ENCODE measurements at regions of chrX and their contacts with region 1.

Region 1: GRCh38 chrX:19372170-19372546 is 28.4 kb downstream of the PDHA1 start:
- DNase-seq: peak in 4 of 5 donors; percentile 41 to 66 (median 50)
- ATAC-seq: peak; percentile 19 to 81 (median 72)
- H3K4me3 ChIP-seq: peak overlapping the region in 11 of 12 donors; percentile 8 to 58 (median 44)
- H3K27ac ChIP-seq: no peak overlapping the region
- H3K4me1 ChIP-seq: peaks cover 0 to 2% (median 0%) of the 10 kb centered on the region in 12 donors
- H3K27me3 ChIP-seq: no peaks in the 10 kb centered on the region
- CTCF ChIP-seq: peak; percentile 47 to 76 (median 61)
- POLR2A ChIP-seq: no peak

Region 2: GRCh38 chrX:18973527-18974192 is 398.5 kb before region 1 on chrX:
- intact Hi-C with region 1: no loop called
- DNase-seq: no peak
- ATAC-seq: peak in 2 of 4 donors; percentile 46 to 53
- H3K4me3 ChIP-seq: no peak overlapping the region
- H3K27ac ChIP-seq: no peak overlapping the region
- H3K4me1 ChIP-seq: peaks cover 0 to 12% (median 0%) of the 10 kb centered on the region in 12 donors
- H3K27me3 ChIP-seq: no peaks in the 10 kb centered on the region
- CTCF ChIP-seq: no peak
- POLR2A ChIP-seq: no peak

Region 3: GRCh38 chrX:19303256-19303880 is 68.8 kb before region 1 on chrX:
- intact Hi-C with region 1: no loop called
- DNase-seq: no peak
- ATAC-seq: peak in 1 of 4 donors; percentile 34
- H3K4me3 ChIP-seq: no peak overlapping the region
- H3K27ac ChIP-seq: no peak overlapping the region
- H3K4me1 ChIP-seq: no peaks in the 10 kb centered on the region
- H3K27me3 ChIP-seq: peaks cover 0 to 5% (median 0%) of the 10 kb centered on the region in 9 donors
- CTCF ChIP-seq: no peak
- POLR2A ChIP-seq: no peak

Region 4: GRCh38 chrX:19440713-19441112 is 68.6 kb after region 1 on chrX:
- intact Hi-C with region 1: no loop called
- DNase-seq: no peak
- ATAC-seq: no peak
- H3K4me3 ChIP-seq: no peak overlapping the region
- H3K27ac ChIP-seq: no peak overlapping the region
- H3K4me1 ChIP-seq: no peaks in the 10 kb centered on the region
- H3K27me3 ChIP-seq: no peaks in the 10 kb centered on the region
- CTCF ChIP-seq: no peak
- POLR2A ChIP-seq: no peak

Region 5: GRCh38 chrX:19535476-19535875 is 163.3 kb after region 1 on chrX:
- intact Hi-C with region 1: loop called in 8 of 10 experiments (anchors 5 to 10 kb)
- DNase-seq: no peak
- ATAC-seq: no peak
- H3K4me3 ChIP-seq: no peak overlapping the region
- H3K27ac ChIP-seq: no peak overlapping the region
- H3K4me1 ChIP-seq: no peaks in the 10 kb centered on the region
- H3K27me3 ChIP-seq: peaks cover 0 to 5% (median 0%) of the 10 kb centered on the region in 9 donors
- CTCF ChIP-seq: peak in 5 of 12 donors; percentile 18 to 32 (median 27)
- POLR2A ChIP-seq: no peak

Region 6: GRCh38 chrX:19544693-19545305 is 172.6 kb after region 1 on chrX:
- intact Hi-C with region 1: loop called in 7 of 10 experiments (anchors 5 to 10 kb)
- DNase-seq: peak in 3 of 5 donors; percentile 23 to 35 (median 31)
- ATAC-seq: peak; percentile 64 to 84 (median 76)
- H3K4me3 ChIP-seq: no peak overlapping the region
- H3K27ac ChIP-seq: peak overlapping the region in 4 of 12 donors; percentile 18 to 42 (median 30)
- H3K4me1 ChIP-seq: peaks cover 0 to 4% (median 0%) of the 10 kb centered on the region in 12 donors
- H3K27me3 ChIP-seq: no peaks in the 10 kb centered on the region
- CTCF ChIP-seq: peak; percentile 49 to 80 (median 66)
- POLR2A ChIP-seq: no peak

Region 7: GRCh38 chrX:19739683-19740082 is 367.5 kb after region 1 on chrX:
- intact Hi-C with region 1: loop called in 1 of 10 experiments (anchors 10 kb)
- DNase-seq: peak; percentile 40 to 61 (median 52)
- ATAC-seq: peak in 3 of 4 donors; percentile 61 to 77 (median 73)
- H3K4me3 ChIP-seq: no peak overlapping the region
- H3K27ac ChIP-seq: no peak overlapping the region
- H3K4me1 ChIP-seq: peaks cover 0 to 9% (median 0%) of the 10 kb centered on the region in 12 donors
- H3K27me3 ChIP-seq: peaks cover 0 to 10% (median 0%) of the 10 kb centered on the region in 9 donors
- CTCF ChIP-seq: peak; percentile 49 to 70 (median 60)
- POLR2A ChIP-seq: no peak

Region 8: DNA sequence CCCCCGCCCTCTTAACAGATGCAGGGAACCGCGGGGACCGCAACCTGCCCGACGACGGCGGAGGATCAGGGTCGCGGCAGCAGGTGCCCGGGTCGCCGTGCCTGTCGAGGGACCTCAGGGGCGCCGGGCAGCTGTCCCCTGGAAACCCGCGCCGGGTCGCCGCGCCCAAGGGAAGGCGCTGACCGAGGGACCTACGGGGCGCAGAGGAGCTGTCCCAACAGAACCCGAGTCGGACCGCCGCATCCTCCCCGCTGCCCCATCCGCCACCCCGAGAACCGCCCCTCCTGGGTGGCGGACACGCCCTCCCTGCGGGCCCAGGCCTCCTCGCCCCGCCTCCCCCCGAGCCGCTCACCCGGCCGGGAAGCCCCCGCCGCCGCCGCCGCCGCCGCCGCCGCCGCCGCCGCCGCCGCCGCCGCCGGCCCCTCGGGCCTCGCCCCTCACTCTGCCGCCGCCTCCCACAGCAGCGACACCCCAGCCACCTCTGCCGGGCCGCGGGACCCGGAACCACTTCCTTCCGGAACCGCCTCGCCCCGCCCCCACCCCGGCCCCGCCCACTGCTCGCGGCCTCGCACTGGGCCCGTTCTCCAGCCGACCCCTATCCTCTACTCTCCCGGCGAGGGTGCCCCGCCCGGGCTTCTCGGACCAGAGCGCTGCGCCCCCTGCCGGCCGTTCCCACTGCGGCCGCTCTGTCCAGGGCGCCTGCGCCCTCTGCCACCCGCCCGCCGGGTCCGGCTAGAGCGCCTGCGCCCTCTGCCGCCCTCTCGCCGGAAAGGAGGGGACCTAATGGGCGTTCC is 618.6 kb after region 1 on chrX and contains the start of gene BCLAF3:
- intact Hi-C with region 1: loop called in 1 of 10 experiments (anchors 10 kb)
- DNase-seq: peak; percentile 90 to 95 (median 90)
- ATAC-seq: peak; percentile 99 to 100 (median 100)
- H3K4me3 ChIP-seq: peak within 1 kb of the TSS; percentile 52 to 90 (median 77)
- H3K27ac ChIP-seq: peak within 1 kb of the TSS in 11 of 12 donors; percentile 44 to 80 (median 66)
- H3K4me1 ChIP-seq: peaks cover 0 to 12% (median 0%) of the 10 kb centered on the region in 12 donors
- H3K27me3 ChIP-seq: no peaks in the 10 kb centered on the region
- CTCF ChIP-seq: peak; percentile 65 to 86 (median 77)
- POLR2A ChIP-seq: no peak
- total RNA-seq, gene BCLAF3: 2.4 to 10.6 (median 7.8) TPM

Region 9: DNA sequence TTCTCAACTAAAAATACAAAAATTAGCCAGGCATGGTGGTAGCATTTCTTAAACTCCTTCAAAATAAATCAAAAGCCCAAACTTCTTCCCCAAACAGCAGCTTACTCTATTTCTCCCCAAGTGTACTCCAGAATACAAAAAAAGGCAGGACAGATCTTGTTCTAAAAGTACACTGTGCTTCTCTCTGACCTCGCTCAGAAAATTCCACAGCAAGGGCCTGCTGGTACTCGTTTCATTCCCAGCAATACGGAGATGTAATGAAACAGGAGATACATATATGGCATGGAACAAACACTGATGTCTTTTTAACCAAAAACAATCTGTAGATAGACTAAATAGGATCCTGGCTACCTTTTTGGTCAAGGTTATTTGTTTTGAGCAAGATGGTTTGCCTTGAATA is 719.3 kb after region 1 on chrX:
- intact Hi-C with region 1: no loop called
- DNase-seq: no peak
- ATAC-seq: no peak
- H3K4me3 ChIP-seq: no peak overlapping the region
- H3K27ac ChIP-seq: no peak overlapping the region
- H3K4me1 ChIP-seq: no peaks in the 10 kb centered on the region
- H3K27me3 ChIP-seq: peaks cover 0 to 25% (median 0%) of the 10 kb centered on the region in 9 donors
- CTCF ChIP-seq: no peak
- POLR2A ChIP-seq: no peak

Measured in heart left ventricle (tissue), 16 donors.